B cell (primary cell): ENCODE measurements at regions of chr2 and their contacts with region 1.

Region 1: GRCh38 chr2:216081487-216082116 is at the starts of genes PECR and TMEM169:
- DNase-seq: peak; percentile 76
- ATAC-seq: peak; percentile 97
- H3K4me3 ChIP-seq: peak within 1 kb of the TSS; percentile 63 to 87 (median 79)
- H3K4me3 Mint-ChIP-seq: peak within 1 kb of the TSS; percentile 91
- H3K27ac ChIP-seq: peak within 1 kb of the TSS; percentile 51 to 68
- H3K27ac Mint-ChIP-seq: peak within 1 kb of the TSS; percentile 80
- H3K4me1 ChIP-seq: peaks cover 40 to 41% of the 10 kb centered on the region in 2 donors
- H3K4me1 Mint-ChIP-seq: peaks cover 45% of the 10 kb centered on the region
- H3K27me3 ChIP-seq: no peaks in the 10 kb centered on the region
- H3K27me3 Mint-ChIP-seq: no peaks in the 10 kb centered on the region
- CTCF ChIP-seq: no peak
- total RNA-seq, gene PECR: 15.6 and 16.5 TPM in 2 replicates
- total RNA-seq, gene TMEM169: 0.84 and 1.2 TPM in 2 replicates

Region 2: DNA sequence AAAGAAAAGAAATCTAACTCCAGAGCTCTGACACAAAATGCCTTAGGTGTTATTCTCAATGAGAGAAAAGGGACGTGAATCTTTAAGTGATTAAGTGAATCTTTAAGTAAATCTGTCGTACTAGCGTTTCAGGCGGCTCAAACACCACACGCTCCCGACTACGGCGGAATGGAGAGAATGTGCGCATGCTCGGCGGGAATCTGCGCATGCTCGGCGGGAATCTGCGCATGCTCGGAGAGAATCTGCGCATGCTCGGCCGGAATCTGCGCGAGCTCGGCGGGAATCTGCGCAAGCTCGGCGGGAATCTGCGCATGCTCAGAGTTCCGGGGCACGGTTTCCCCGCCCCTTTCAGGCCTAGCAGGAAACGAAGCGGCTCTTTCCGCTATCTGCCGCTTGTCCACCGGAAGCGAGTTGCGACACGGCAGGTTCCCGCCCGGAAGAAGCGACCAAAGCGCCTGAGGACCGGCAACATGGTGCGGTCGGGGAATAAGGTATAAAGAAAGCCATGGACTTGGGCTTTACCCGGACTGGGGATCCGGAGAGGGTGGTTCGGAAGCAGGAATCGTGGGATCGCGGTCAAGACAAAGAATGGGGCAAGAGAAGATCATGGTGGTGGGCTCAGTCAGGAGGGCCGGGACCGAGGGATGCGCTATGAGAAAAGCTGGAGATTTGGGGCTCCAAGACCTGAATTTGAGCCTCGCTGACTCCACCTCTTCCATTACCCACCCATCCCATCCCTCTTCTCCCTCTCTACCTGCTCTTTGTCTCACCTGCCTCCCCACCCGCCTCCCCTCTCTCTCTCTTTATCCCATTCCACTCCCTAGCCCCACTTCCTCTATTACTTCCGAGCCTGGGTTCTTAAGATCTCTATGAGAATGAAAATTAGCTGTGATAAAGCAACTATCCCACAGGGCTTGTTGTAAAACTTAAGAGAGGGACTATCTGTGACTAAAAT is 27.6 kb after region 1 on chr2 and contains the start of gene XRCC5:
- CTCF ChIA-PET with region 1: interaction called, 8 read pairs
- POLR2A ChIA-PET with region 1: interaction called, 17 read pairs
- intact Hi-C with region 1: loop called (anchors 1 kb)
- DNase-seq: peak; percentile 99
- ATAC-seq: peak; percentile 91
- H3K4me3 ChIP-seq: peak within 1 kb of the TSS; percentile 71 to 96 (median 95)
- H3K4me3 Mint-ChIP-seq: peak within 1 kb of the TSS; percentile 100
- H3K27ac ChIP-seq: peak within 1 kb of the TSS; percentile 91 to 97
- H3K27ac Mint-ChIP-seq: peak within 1 kb of the TSS; percentile 100
- H3K4me1 ChIP-seq: peaks cover 26 to 31% of the 10 kb centered on the region in 2 donors
- H3K4me1 Mint-ChIP-seq: peaks cover 51% of the 10 kb centered on the region
- H3K27me3 ChIP-seq: no peaks in the 10 kb centered on the region
- H3K27me3 Mint-ChIP-seq: peaks cover 3% of the 10 kb centered on the region
- CTCF ChIP-seq: no peak
- total RNA-seq, gene XRCC5: 198 and 216 TPM in 2 replicates